Head of caudate nucleus (tissue), 42 donors: ENCODE measurements at regions of chr9 and their contacts with region 1.

Region 1: DNA sequence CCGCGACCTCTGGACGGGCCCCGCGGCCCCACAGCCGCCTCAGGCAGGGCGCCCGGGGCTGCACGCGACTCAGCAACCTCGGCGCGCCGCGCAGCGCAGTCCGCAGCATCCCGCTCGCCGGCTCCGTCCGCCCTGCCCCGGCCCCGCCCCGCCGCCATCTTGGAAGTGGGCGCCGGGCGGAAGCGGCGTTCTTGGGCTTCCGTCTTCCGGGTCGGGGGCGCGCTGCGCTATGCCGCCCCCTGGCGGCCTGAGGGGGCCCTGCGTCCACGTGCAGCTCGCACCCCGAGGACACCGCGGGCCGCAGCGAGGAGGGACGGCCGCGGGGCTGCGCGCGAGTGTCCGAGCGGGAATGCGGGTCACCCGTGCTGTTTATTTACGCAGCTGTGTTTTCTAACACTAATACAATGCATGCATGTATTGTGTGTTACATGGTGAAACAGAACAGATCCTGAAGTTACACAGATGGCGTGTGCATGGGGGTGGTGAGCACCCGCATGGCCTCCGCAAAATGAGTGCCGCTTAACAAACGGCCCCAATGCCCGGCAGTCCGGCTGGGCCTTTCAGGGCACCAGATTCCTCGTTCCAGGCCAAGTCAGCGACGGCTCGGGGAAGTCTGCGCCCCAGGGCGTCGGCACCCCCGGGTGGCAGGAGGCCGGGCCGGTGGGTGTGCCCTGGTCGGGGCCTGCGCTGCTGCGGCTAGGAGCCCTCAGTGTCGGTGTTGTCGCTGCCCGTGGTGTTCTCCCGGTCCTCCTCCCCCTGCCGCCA is at the start of gene DNLZ:
- DNase-seq: peak; percentile 41 to 93 (median 81)

Region 2: DNA sequence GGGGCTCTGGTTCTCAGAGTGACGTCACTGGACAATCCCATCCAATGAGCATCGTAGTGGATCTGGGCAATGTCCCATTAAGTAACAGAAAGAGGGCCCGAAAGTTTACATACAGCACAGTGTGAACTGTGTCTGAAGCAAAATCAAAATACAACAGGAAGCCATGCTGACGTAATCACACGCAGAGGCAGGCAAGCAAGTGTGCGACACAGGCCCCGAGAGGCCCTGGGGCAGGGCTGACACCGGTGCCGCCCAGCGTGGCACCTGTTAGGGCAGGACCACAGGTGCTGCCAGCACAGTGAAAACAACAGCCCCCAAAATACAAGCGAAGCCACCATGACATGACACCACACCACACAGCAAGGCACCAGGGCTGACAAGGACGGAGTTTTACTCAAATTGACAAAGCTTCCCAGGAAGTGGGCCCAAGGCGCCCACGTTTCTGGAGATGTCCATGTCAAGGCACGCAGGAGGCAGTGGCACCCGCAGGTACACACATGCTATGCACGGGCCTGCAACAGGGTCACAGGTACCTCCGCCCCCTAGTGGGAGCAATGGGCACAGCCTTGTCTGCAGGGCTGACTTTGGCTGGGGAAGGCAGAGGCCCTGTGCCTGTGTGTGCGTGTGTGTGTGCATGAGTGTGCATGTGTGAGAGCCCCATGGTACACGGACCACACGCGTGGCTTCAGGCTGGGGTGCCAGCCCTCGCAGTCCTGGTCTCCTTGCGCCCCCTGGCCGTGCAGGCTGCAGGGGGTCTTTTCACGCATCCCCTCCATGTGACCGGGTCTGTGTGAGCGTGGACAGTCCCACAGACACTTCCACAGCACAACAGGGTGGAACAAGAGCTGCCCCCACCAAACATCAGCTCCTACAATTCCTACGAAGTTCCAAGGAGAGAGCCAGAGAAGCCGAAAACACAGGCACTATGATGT is 137.8 kb before region 1 on chr9:
- intact Hi-C with region 1: no loop called
- DNase-seq: peak in 40 of 42 donors; percentile 27 to 76 (median 54)

Region 3: GRCh38 chr9:136312436-136312835 is 51.4 kb before region 1 on chr9:
- intact Hi-C with region 1: loop called (anchors 5 kb)
- DNase-seq: peak; percentile 45 to 84 (median 70)

Region 4: GRCh38 chr9:136400038-136400834 is 36.4 kb after region 1 on chr9 and contains the start of gene SNAPC4:
- intact Hi-C with region 1: loop called (anchors 5 kb)
- DNase-seq: peak; percentile 50 to 93 (median 85)

Region 5: DNA sequence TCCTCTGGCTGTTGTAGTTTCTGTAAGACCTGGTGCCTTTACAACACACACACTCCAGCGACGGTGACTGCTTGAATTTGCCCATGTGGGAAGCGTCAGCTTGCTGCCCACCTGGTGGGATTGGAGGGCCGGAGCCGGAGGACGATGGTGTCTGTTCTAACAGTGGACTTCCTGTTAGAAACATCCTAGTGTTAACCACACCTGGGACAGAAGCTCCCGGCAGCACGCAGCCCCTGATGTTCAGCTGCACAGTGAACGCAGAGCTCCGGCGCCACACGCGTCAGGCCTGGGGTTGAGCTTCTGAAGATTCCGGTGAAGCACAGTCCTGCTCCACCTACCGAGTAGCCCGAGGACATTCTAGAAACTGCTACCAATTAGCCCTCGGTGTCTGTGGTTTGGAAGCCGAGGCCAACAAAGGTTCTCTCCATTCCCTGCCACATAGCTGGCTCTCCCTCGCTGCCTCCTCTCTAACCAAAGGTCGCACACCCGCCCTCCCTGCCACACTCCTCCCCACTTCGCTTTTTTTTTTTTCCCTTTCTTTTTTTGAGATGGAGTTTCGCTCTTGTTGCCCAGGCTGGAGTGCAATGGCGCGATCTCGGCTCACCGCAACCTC is 61.1 kb after region 1 on chr9:
- intact Hi-C with region 1: no loop called
- DNase-seq: no peak